CD4-positive, alpha-beta T cell (primary cell): ENCODE measurements at regions of chr2 and their contacts with region 1.

Region 1: GRCh38 chr2:202681688-202682205 is 47.0 kb downstream of the FAM117B start:
- DNase-seq: no peak
- ATAC-seq: no peak
- H3K4me3 ChIP-seq: no peak overlapping the region
- H3K4me3 Mint-ChIP-seq: no peak overlapping the region
- H3K27ac ChIP-seq: no peak overlapping the region
- H3K27ac Mint-ChIP-seq: no peak overlapping the region
- H3K4me1 ChIP-seq: peaks cover 8% of the 10 kb centered on the region
- H3K4me1 Mint-ChIP-seq: peaks cover 63% of the 10 kb centered on the region
- H3K27me3 ChIP-seq: no peaks in the 10 kb centered on the region
- H3K27me3 Mint-ChIP-seq: no peaks in the 10 kb centered on the region
- CTCF ChIP-seq: no peak

Region 2: DNA sequence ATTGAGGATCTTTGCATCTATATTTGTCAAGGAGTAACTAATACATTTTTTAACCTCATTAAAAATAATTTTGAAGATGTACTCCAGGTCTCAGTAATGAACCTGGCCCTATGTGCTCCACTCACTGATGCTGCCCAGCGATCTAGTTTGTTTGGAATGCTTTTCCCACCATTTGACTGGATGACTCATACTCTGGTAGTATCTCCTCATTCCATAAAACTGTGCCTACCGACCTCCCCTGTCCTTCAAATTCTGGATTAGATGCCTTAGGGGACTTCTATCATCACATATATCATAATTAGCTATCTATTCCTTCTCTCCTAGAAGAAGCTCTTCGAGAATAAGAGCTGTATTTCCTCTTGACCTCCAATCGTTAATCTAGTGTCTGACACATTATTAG is 36.9 kb after region 1 on chr2:
- CTCF ChIA-PET with region 1: no interaction called
- POLR2A ChIA-PET with region 1: no interaction called
- intact Hi-C with region 1: loop called in 1 of 2 experiments (anchors 5 kb)
- DNase-seq: no peak
- ATAC-seq: no peak
- H3K4me3 ChIP-seq: no peak overlapping the region
- H3K4me3 Mint-ChIP-seq: no peak overlapping the region
- H3K27ac ChIP-seq: no peak overlapping the region
- H3K27ac Mint-ChIP-seq: peak overlapping the region; percentile 15
- H3K4me1 ChIP-seq: peaks cover 7% of the 10 kb centered on the region
- H3K4me1 Mint-ChIP-seq: peaks cover 62% of the 10 kb centered on the region
- H3K27me3 ChIP-seq: no peaks in the 10 kb centered on the region
- H3K27me3 Mint-ChIP-seq: no peaks in the 10 kb centered on the region
- CTCF ChIP-seq: no peak